ENCODE measurements at regions of chr1 and their contacts with region 1.

Region 1: GRCh38 chr1:198359024-198359653 is 181.3 kb downstream of the ATP6V1G3 start:
- DNase-seq: no peak
- H3K4me3 ChIP-seq: no peak overlapping the region
- H3K27ac ChIP-seq: no peak overlapping the region
- H3K4me1 ChIP-seq: no peaks in the 10 kb centered on the region
- H3K27me3 ChIP-seq: no peaks in the 10 kb centered on the region
- CTCF ChIP-seq: peak; percentile 19 to 61 (median 24)
- POLR2A ChIP-seq: no peak

Region 2: DNA sequence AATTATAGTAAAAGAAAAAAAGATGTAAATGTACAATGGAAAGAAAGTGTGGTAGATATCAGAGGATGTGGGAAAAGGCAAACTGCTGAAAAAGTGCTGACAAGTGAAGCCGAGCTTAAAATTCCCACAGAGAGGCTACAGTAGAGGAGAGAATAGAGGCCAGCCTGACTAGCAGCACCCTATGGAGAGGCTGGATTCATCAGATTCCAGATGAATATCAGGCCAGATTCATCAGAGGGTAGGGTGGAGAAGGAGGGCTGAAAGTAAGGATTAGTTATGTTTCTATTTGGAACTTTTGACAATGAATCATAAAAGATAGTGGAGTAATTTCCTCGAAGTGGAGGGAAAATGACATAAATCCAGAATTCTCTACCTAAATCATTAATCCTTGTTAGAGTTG is 262.7 kb before region 1 on chr1:
- intact Hi-C with region 1: loop called (anchors 10 kb)
- DNase-seq: no peak
- H3K4me3 ChIP-seq: no peak overlapping the region
- H3K27ac ChIP-seq: no peak overlapping the region
- H3K4me1 ChIP-seq: no peaks in the 10 kb centered on the region
- H3K27me3 ChIP-seq: no peaks in the 10 kb centered on the region
- CTCF ChIP-seq: no peak
- POLR2A ChIP-seq: no peak